OCI-LY7 (cell line): ENCODE measurements at regions of chr5 and their contacts with region 1.

Region 1: GRCh38 chr5:149561848-149562247 is 10.6 kb upstream of the CSNK1A1 start:
- DNase-seq: peak; percentile 17
- H3K4me3 ChIP-seq: no peak overlapping the region
- H3K27ac ChIP-seq: no peak overlapping the region
- H3K4me1 ChIP-seq: peaks cover 10% of the 10 kb centered on the region
- CTCF ChIP-seq: no peak

Region 2: DNA sequence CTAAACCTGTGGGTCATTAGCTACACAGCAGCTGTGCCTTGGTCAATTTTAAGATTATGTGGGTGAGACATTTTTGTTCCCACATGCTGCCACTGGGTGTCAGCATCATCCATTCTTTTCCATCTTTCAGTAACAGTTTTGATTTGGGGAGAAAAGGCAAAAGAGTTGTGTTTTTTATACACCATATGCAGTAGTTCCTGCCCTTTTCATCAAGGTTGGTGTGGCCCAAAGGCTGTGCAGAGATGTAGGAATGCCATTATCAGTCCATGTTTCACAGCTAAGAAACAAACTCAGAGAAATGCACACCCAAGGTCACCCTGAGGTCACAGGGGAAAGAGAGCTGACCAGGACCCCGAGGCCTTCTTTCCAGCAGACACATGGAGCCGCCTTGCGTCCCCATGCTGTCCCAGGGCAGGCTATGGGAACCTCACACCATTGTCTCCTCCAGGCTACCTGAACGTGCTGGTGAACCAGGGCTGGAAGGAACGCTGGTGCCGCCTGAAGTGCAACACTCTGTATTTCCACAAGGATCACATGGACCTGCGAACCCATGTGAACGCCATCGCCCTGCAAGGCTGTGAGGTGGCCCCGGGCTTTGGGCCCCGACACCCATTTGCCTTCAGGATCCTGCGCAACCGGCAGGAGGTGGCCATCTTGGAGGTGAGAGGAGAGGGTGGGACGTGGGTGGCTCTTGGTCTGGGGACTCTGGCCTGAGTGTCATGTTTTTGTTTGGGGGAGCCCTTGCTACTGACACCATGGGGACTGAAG is 244.4 kb before region 1 on chr5:
- CTCF ChIA-PET with region 1: no interaction called
- POLR2A ChIA-PET with region 1: no interaction called
- intact Hi-C with region 1: loop called (anchors 5 kb)
- DNase-seq: peak; percentile 54
- H3K4me3 ChIP-seq: no peak overlapping the region
- H3K27ac ChIP-seq: no peak overlapping the region
- H3K4me1 ChIP-seq: no peaks in the 10 kb centered on the region
- CTCF ChIP-seq: peak; percentile 90

Region 3: DNA sequence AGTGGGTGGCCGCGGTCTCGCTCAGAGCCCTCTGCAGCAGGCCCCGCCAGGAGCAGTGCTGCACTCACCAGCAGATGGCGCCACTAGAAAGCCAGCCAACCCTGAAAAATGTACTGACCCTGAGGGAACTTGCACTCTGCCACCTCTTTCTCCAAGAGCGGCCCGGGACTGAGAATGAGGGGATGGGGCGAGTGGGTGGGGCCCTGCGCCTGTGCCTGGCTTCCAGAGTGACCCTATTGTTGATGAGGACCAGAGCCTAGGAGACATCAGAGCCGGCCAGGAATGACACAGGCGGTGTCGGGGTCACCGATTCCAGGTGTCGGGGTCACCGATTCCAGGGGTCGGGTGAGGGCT is 179.9 kb before region 1 on chr5:
- CTCF ChIA-PET with region 1: interaction called, 3 read pairs
- POLR2A ChIA-PET with region 1: interaction called, 3 read pairs
- intact Hi-C with region 1: loop called (anchors 1 kb)
- DNase-seq: peak; percentile 63
- H3K4me3 ChIP-seq: no peak overlapping the region
- H3K27ac ChIP-seq: no peak overlapping the region
- H3K4me1 ChIP-seq: no peaks in the 10 kb centered on the region
- CTCF ChIP-seq: peak; percentile 90

Region 4: DNA sequence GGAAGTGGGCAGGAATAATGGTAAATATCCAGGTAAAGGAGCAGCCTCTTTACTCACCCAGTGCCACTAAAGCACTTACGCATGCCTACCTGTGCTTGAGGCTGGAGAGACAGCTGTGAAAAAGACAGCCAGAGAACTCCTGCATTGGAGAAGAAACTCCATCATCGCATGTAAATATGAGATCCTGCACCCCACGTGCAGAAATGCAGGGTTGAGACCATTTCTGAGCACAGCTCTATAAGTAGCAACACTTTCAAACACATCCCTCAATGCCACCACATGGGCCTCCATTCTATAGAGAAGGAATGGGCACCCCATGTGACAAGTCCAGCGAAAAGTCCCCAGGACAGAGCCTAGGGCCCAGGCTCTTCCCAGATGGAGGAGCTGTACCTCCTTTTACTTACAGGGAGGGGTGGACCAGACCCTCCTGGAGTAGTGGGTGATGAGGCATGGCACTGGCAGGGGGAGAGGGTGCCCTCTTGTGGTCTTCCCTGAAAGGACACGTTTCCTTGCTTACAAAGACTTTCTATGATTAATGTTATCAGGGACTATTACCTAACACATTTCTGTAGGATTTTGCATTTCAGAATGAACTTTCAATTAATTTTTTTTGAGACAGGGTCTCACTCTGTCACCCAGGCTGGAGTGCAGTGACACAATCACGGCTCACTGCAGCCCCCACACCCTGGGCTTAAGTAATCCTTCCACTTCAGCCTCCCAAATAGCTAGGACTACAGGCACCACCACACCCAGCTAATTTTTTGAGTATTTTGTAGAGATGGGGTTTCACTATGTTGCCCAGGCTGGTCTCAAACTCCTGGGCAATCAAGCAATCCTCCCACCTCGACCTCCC is 127.5 kb before region 1 on chr5:
- CTCF ChIA-PET with region 1: no interaction called
- POLR2A ChIA-PET with region 1: no interaction called
- intact Hi-C with region 1: loop called (anchors 2 kb)
- DNase-seq: peak; percentile 63
- H3K4me3 ChIP-seq: no peak overlapping the region
- H3K27ac ChIP-seq: no peak overlapping the region
- H3K4me1 ChIP-seq: peaks cover 26% of the 10 kb centered on the region
- CTCF ChIP-seq: peak; percentile 91

Region 5: DNA sequence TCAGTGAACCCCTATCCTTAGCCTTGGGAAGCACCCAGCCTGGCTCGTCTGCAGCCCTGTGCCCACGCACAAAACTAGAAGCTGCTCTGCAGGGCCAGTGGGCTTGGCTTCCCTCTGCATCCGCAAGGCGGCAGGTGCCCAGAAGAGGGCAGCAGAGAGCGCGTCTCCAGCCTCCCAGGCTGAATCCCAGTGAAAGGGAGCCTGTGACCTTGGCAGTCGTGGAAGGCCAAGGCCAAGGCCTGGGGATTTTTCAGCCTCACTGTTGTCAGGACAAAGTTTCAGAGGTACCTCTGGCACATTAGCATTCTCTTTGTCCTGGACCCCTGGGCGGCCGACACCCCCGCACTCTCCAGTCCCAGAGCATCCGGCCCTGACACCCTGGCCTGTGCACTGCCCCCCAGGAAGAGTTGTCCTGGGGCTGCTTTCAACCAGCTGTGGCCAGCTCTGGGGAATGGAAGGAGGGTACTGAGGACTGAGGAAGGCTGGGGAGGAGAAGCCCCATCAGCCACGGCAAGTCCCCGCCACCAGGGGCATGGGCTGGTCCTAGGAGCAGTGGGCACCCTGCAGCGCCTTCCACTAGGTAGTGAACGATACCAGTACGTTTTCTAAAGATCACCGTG is 119.2 kb before region 1 on chr5:
- CTCF ChIA-PET with region 1: interaction called, 3 read pairs
- POLR2A ChIA-PET with region 1: interaction called, 4 read pairs
- intact Hi-C with region 1: loop called (anchors 1 kb)
- DNase-seq: peak; percentile 63
- H3K4me3 ChIP-seq: no peak overlapping the region
- H3K27ac ChIP-seq: no peak overlapping the region
- H3K4me1 ChIP-seq: no peaks in the 10 kb centered on the region
- CTCF ChIP-seq: peak; percentile 88

Region 6: DNA sequence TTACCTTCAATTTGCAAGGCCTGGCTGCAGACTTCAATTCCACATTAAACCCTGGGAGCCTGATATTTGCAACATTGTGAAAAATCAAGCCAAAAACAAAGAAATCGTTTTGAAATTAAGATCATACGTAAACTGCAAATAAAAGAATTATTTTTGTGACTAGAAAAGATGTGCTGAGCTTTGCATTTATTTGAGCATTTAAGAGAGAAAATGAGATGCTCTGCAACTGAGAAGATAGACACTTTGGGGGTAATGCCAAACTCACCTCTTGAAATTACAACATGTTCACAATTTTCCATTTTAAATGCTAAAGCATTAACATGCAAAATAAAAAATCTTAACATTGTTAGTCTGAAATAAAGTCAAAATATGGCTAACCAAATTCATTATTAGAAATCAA is 57.2 kb before region 1 on chr5:
- CTCF ChIA-PET with region 1: no interaction called
- POLR2A ChIA-PET with region 1: no interaction called
- intact Hi-C with region 1: no loop called
- DNase-seq: no peak
- H3K4me3 ChIP-seq: no peak overlapping the region
- H3K27ac ChIP-seq: no peak overlapping the region
- H3K4me1 ChIP-seq: no peaks in the 10 kb centered on the region
- CTCF ChIP-seq: no peak

Region 7: GRCh38 chr5:149618581-149619251 is 56.9 kb after region 1 on chr5:
- CTCF ChIA-PET with region 1: interaction called, 6 read pairs
- POLR2A ChIA-PET with region 1: interaction called, 4 read pairs
- intact Hi-C with region 1: loop called (anchors 1 kb)
- DNase-seq: peak; percentile 78
- H3K4me3 ChIP-seq: no peak overlapping the region
- H3K27ac ChIP-seq: peak overlapping the region; percentile 44
- H3K4me1 ChIP-seq: peaks cover 47% of the 10 kb centered on the region
- CTCF ChIP-seq: peak; percentile 94

Region 8: GRCh38 chr5:149719678-149720077 is 157.8 kb after region 1 on chr5:
- CTCF ChIA-PET with region 1: no interaction called
- POLR2A ChIA-PET with region 1: no interaction called
- intact Hi-C with region 1: no loop called
- DNase-seq: no peak
- H3K4me3 ChIP-seq: no peak overlapping the region
- H3K27ac ChIP-seq: no peak overlapping the region
- H3K4me1 ChIP-seq: peaks cover 5% of the 10 kb centered on the region
- CTCF ChIP-seq: no peak